B cell (primary cell): ENCODE measurements at regions of chr6 and their contacts with region 1.

Region 1: DNA sequence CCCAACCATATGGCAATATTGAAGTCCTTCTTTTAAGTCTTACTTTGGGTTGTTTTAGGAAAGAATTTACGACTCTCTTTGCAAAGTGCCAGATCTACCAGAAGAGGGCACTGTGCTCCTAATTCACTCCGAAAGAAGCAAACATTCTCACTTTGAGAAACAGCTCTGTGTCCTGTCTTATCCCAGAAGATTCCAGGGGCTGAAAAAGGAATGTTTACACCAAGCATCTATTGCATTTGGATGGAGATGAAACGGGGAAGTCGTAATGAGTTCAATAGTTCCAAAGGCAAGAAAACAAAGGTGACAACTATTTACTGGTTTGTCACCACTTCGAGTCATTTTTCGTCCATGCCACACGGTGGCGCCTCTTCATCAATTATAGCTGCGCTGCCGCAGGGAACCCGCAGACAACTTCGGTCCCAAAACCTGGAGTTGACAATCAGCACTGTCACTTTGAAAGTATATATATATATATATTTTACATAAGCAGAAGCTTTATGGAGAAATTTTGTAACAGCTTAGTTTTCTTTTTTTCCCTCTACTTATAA is 121.6 kb downstream of the MOXD1 start:
- DNase-seq: peak; percentile 90
- ATAC-seq: peak; percentile 84
- H3K4me3 ChIP-seq: peak overlapping the region; percentile 34 to 79 (median 48)
- H3K4me3 Mint-ChIP-seq: peak overlapping the region; percentile 92
- H3K27ac ChIP-seq: no peak overlapping the region
- H3K27ac Mint-ChIP-seq: peak overlapping the region; percentile 54
- H3K4me1 ChIP-seq: no peaks in the 10 kb centered on the region
- H3K4me1 Mint-ChIP-seq: no peaks in the 10 kb centered on the region
- H3K27me3 ChIP-seq: no peaks in the 10 kb centered on the region
- H3K27me3 Mint-ChIP-seq: peaks cover 4% of the 10 kb centered on the region
- CTCF ChIP-seq: peak; percentile 100

Region 2: GRCh38 chr6:131476362-131476761 is 803.3 kb before region 1 on chr6:
- CTCF ChIA-PET with region 1: no interaction called
- POLR2A ChIA-PET with region 1: no interaction called
- intact Hi-C with region 1: no loop called
- DNase-seq: no peak
- ATAC-seq: no peak
- H3K4me3 ChIP-seq: no peak overlapping the region
- H3K4me3 Mint-ChIP-seq: no peak overlapping the region
- H3K27ac ChIP-seq: no peak overlapping the region
- H3K27ac Mint-ChIP-seq: no peak overlapping the region
- H3K4me1 ChIP-seq: no peaks in the 10 kb centered on the region
- H3K4me1 Mint-ChIP-seq: no peaks in the 10 kb centered on the region
- H3K27me3 ChIP-seq: no peaks in the 10 kb centered on the region
- H3K27me3 Mint-ChIP-seq: no peaks in the 10 kb centered on the region
- CTCF ChIP-seq: no peak

Region 3: DNA sequence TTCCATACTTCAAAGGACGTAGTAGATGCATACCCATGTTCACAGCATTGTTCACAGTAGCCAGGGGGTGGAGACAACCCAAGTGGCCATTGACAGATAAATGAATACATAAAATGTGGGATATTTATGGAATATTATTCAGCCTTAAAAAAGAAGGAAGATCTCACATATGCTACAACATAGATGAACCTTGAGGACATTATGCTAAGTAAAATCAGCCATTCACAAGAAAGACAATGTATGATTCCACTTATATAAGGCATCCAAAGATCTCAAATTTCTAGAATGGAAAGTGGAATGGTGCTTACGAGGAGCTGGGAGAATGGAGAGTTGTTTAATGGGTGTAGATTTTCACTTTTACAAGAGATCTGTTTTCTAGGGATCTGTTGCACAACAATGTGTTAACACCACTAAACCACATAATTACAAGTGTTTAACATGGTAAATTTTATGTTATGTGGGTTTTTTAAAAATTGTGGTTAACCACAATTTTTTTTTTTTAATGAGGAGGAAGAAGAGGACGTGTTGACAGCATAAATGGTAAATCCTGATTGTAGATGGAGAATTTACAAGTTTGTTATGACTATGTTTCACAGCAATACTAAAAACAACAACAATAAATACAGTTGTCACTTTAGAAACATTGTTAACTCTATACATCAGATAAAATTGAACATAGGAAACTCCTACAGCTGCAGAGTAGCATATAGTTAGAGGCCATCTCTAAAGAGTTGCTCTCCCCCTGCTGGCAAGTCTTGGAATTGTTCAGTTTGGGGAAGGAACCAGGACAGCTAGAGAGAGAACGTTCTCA is 370.1 kb before region 1 on chr6:
- CTCF ChIA-PET with region 1: interaction called, 10 read pairs
- POLR2A ChIA-PET with region 1: no interaction called
- intact Hi-C with region 1: loop called (anchors 2 kb)
- DNase-seq: peak; percentile 79
- ATAC-seq: peak; percentile 94
- H3K4me3 ChIP-seq: no peak overlapping the region
- H3K4me3 Mint-ChIP-seq: no peak overlapping the region
- H3K27ac ChIP-seq: no peak overlapping the region
- H3K27ac Mint-ChIP-seq: no peak overlapping the region
- H3K4me1 ChIP-seq: peaks cover 0 to 5% of the 10 kb centered on the region in 2 donors
- H3K4me1 Mint-ChIP-seq: peaks cover 6% of the 10 kb centered on the region
- H3K27me3 ChIP-seq: peaks cover 0 to 13% (median 5%) of the 10 kb centered on the region in 4 experiments
- H3K27me3 Mint-ChIP-seq: peaks cover 33% of the 10 kb centered on the region
- CTCF ChIP-seq: peak; percentile 98

Region 4: GRCh38 chr6:132131758-132132157 is 147.9 kb before region 1 on chr6:
- CTCF ChIA-PET with region 1: no interaction called
- POLR2A ChIA-PET with region 1: no interaction called
- intact Hi-C with region 1: no loop called
- DNase-seq: peak; percentile 29
- ATAC-seq: peak; percentile 48
- H3K4me3 ChIP-seq: no peak overlapping the region
- H3K4me3 Mint-ChIP-seq: peak overlapping the region; percentile 81
- H3K27ac ChIP-seq: peak overlapping the region; percentile 77 to 91
- H3K27ac Mint-ChIP-seq: peak overlapping the region; percentile 93
- H3K4me1 ChIP-seq: peaks cover 62 to 64% of the 10 kb centered on the region in 2 donors
- H3K4me1 Mint-ChIP-seq: peaks cover 62% of the 10 kb centered on the region
- H3K27me3 ChIP-seq: no peaks in the 10 kb centered on the region
- H3K27me3 Mint-ChIP-seq: no peaks in the 10 kb centered on the region
- CTCF ChIP-seq: no peak

Region 5: DNA sequence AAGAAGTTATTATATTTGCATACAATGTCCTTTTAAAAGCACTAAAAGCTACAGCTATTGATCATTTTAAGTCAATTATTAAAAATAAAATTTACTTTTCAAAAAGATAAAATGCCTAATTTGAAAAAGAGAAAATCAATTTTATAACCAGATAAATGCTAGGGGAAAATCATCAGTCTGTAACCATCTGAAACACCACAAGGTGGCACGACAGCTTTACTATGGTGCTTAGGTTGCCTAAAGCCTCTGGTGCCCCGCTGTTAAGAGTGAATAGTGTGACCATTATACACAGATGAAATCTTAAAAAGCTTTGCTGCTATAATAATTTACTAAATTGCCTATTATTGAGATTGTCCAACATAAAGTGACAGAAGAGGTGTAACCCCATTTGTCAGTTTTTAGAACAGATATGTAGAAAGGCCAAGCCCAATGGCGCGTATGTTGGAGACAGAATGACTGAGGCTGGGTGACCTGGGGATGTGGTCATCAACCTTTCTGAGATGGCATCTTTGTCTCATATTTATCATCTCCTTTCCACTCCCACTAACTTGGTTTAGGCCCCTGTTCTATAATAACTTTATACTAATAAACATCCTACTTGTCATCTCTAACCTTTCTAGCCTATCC is 20.8 kb after region 1 on chr6:
- CTCF ChIA-PET with region 1: interaction called, 530 read pairs
- POLR2A ChIA-PET with region 1: interaction called, 6 read pairs
- intact Hi-C with region 1: loop called (anchors 1 kb)
- DNase-seq: peak; percentile 73
- ATAC-seq: peak; percentile 96
- H3K4me3 ChIP-seq: no peak overlapping the region
- H3K4me3 Mint-ChIP-seq: no peak overlapping the region
- H3K27ac ChIP-seq: no peak overlapping the region
- H3K27ac Mint-ChIP-seq: no peak overlapping the region
- H3K4me1 ChIP-seq: no peaks in the 10 kb centered on the region
- H3K4me1 Mint-ChIP-seq: no peaks in the 10 kb centered on the region
- H3K27me3 ChIP-seq: no peaks in the 10 kb centered on the region
- H3K27me3 Mint-ChIP-seq: no peaks in the 10 kb centered on the region
- CTCF ChIP-seq: peak; percentile 81

Region 6: DNA sequence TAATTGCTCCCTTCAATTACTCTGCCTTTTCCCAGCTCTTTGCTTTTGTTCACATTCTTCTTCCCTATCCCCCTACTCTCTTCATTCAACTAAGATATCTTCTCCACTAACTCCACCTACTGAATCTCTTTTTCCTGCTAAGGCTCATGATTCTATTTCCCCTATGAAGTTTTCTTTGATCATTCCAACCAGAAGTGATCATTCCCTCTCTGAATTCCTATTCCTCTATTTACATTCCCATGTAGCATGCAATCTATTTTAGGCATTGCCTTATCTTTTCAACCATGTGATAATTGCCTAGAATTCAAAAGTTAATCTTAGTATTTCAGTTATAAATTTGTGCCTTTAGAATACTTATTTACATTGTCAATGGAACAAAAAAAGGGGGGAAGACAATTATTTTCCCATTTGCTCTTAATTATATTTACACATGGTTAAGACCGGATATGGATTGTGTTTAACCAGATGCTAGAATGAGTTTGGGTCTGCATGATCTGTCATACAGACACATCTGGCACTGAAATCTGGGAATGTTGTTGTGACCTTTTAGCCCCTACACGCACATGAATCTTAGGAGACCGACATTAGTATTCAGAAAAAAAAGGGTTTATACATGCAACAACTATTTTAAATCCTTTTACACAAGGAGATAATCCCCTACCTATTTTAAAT is 100.8 kb after region 1 on chr6:
- CTCF ChIA-PET with region 1: interaction called, 14 read pairs
- POLR2A ChIA-PET with region 1: no interaction called
- intact Hi-C with region 1: no loop called
- DNase-seq: no peak
- ATAC-seq: no peak
- H3K4me3 ChIP-seq: no peak overlapping the region
- H3K4me3 Mint-ChIP-seq: no peak overlapping the region
- H3K27ac ChIP-seq: no peak overlapping the region
- H3K27ac Mint-ChIP-seq: no peak overlapping the region
- H3K4me1 ChIP-seq: peaks cover 4 to 14% of the 10 kb centered on the region in 2 donors
- H3K4me1 Mint-ChIP-seq: peaks cover 19% of the 10 kb centered on the region
- H3K27me3 ChIP-seq: no peaks in the 10 kb centered on the region
- H3K27me3 Mint-ChIP-seq: no peaks in the 10 kb centered on the region
- CTCF ChIP-seq: no peak

Region 7: GRCh38 chr6:132456700-132457143 is 177.1 kb after region 1 on chr6:
- CTCF ChIA-PET with region 1: interaction called, 23 read pairs
- POLR2A ChIA-PET with region 1: no interaction called
- intact Hi-C with region 1: no loop called
- DNase-seq: no peak
- ATAC-seq: no peak
- H3K4me3 ChIP-seq: no peak overlapping the region
- H3K4me3 Mint-ChIP-seq: no peak overlapping the region
- H3K27ac ChIP-seq: peak overlapping the region in 1 of 2 donors; percentile 51
- H3K27ac Mint-ChIP-seq: peak overlapping the region; percentile 85
- H3K4me1 ChIP-seq: peaks cover 0 to 14% of the 10 kb centered on the region in 2 donors
- H3K4me1 Mint-ChIP-seq: peaks cover 38% of the 10 kb centered on the region
- H3K27me3 ChIP-seq: no peaks in the 10 kb centered on the region
- H3K27me3 Mint-ChIP-seq: no peaks in the 10 kb centered on the region
- CTCF ChIP-seq: no peak

Region 8: GRCh38 chr6:132483779-132484679 is 204.4 kb after region 1 on chr6:
- CTCF ChIA-PET with region 1: interaction called, 105 read pairs
- POLR2A ChIA-PET with region 1: interaction called, 3 read pairs
- intact Hi-C with region 1: loop called (anchors 1 kb)
- DNase-seq: peak; percentile 83
- ATAC-seq: peak; percentile 78
- H3K4me3 ChIP-seq: peak overlapping the region in 1 of 5 experiments; percentile 5
- H3K4me3 Mint-ChIP-seq: peak overlapping the region; percentile 41
- H3K27ac ChIP-seq: peak overlapping the region; percentile 27 to 92
- H3K27ac Mint-ChIP-seq: peak overlapping the region; percentile 75
- H3K4me1 ChIP-seq: peaks cover 59 to 88% of the 10 kb centered on the region in 2 donors
- H3K4me1 Mint-ChIP-seq: peaks cover 85% of the 10 kb centered on the region
- H3K27me3 ChIP-seq: no peaks in the 10 kb centered on the region
- H3K27me3 Mint-ChIP-seq: no peaks in the 10 kb centered on the region
- CTCF ChIP-seq: peak; percentile 84

Region 9: GRCh38 chr6:132530293-132530974 is 250.8 kb after region 1 on chr6:
- CTCF ChIA-PET with region 1: interaction called, 13 read pairs
- POLR2A ChIA-PET with region 1: no interaction called
- intact Hi-C with region 1: no loop called
- DNase-seq: peak; percentile 82
- ATAC-seq: peak; percentile 71
- H3K4me3 ChIP-seq: peak overlapping the region in 4 of 5 experiments; percentile 7 to 54 (median 46)
- H3K4me3 Mint-ChIP-seq: peak overlapping the region; percentile 85
- H3K27ac ChIP-seq: no peak overlapping the region
- H3K27ac Mint-ChIP-seq: peak overlapping the region; percentile 77
- H3K4me1 ChIP-seq: peaks cover 3 to 4% of the 10 kb centered on the region in 2 donors
- H3K4me1 Mint-ChIP-seq: peaks cover 4% of the 10 kb centered on the region
- H3K27me3 ChIP-seq: no peaks in the 10 kb centered on the region
- H3K27me3 Mint-ChIP-seq: no peaks in the 10 kb centered on the region
- CTCF ChIP-seq: peak; percentile 90